OCI-LY7 (cell line): ENCODE measurements at regions of chr19 and their contacts with region 1.

Region 1: GRCh38 chr19:14366498-14366915 is 14.7 kb upstream of the ADGRE5 start:
- DNase-seq: peak; percentile 89
- H3K4me3 ChIP-seq: peak overlapping the region; percentile 24
- H3K27ac ChIP-seq: peak overlapping the region; percentile 32
- H3K4me1 ChIP-seq: peaks cover 55% of the 10 kb centered on the region
- CTCF ChIP-seq: no peak

Region 2: DNA sequence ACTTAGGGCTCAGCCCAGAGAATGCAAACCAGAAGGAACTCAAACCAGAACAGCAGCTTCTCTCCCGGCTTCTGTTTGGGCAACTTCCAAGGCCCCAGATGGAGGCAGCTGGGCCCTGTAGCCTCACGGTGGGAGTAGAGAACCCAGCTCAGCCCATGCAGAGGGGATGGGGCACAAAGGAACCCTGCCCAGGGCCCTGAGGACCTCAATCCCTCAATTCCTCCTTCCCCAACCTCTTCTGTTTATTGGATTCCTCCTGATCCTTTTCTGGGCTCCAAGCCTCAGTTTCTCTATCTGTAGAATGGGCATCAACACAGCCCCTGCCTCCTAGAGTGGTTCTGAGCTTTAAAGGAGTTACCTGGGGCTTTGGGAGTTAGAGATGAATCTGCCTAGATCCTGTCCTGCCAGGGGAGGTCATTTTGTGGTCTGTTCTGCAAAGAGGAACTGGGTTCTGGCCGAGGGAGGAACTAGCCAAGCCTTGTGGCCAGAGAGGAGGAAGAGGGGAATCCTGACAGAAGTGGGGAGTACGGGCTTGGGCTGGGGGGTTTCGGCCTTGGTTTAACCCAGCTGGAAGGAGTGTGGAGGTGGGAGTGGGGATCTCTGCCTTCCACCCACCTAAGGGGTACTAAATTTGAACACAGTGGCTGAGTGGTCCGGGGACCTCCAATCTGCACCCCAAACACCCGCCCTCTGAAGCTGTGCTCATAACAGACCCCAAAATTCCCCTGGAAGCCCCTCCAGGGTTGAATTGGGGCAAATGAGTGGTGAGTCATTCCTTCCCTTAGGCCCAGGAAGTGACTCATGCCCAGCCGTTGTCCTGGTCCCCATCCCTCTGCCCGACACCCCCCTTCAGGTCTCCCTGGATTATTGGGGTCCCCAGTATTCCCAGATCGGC is 17.4 kb after region 1 on chr19:
- CTCF ChIA-PET with region 1: no interaction called
- POLR2A ChIA-PET with region 1: interaction called, 4 read pairs
- intact Hi-C with region 1: loop called (anchors 2 kb)
- DNase-seq: peak; percentile 47
- H3K4me3 ChIP-seq: peak overlapping the region; percentile 71
- H3K27ac ChIP-seq: peak overlapping the region; percentile 28
- H3K4me1 ChIP-seq: peaks cover 62% of the 10 kb centered on the region
- CTCF ChIP-seq: no peak

Region 3: GRCh38 chr19:14405758-14406644 is 39.5 kb after region 1 on chr19:
- CTCF ChIA-PET with region 1: interaction called, 4 read pairs
- POLR2A ChIA-PET with region 1: interaction called, 6 read pairs
- intact Hi-C with region 1: loop called (anchors 1 kb)
- DNase-seq: peak; percentile 94
- H3K4me3 ChIP-seq: peak overlapping the region; percentile 4
- H3K27ac ChIP-seq: no peak overlapping the region
- H3K4me1 ChIP-seq: peaks cover 4% of the 10 kb centered on the region
- CTCF ChIP-seq: peak; percentile 59; the same call in 1 of the 2 replicates

Region 4: GRCh38 chr19:14479975-14480699 is 113.6 kb after region 1 on chr19:
- CTCF ChIA-PET with region 1: no interaction called
- POLR2A ChIA-PET with region 1: no interaction called
- intact Hi-C with region 1: loop called (anchors 10 kb)
- DNase-seq: peak; percentile 65
- H3K4me3 ChIP-seq: no peak overlapping the region
- H3K27ac ChIP-seq: no peak overlapping the region
- H3K4me1 ChIP-seq: no peaks in the 10 kb centered on the region
- CTCF ChIP-seq: peak; percentile 94